ENCODE measurements at regions of chr16 and their contacts with region 1.

Region 1: DNA sequence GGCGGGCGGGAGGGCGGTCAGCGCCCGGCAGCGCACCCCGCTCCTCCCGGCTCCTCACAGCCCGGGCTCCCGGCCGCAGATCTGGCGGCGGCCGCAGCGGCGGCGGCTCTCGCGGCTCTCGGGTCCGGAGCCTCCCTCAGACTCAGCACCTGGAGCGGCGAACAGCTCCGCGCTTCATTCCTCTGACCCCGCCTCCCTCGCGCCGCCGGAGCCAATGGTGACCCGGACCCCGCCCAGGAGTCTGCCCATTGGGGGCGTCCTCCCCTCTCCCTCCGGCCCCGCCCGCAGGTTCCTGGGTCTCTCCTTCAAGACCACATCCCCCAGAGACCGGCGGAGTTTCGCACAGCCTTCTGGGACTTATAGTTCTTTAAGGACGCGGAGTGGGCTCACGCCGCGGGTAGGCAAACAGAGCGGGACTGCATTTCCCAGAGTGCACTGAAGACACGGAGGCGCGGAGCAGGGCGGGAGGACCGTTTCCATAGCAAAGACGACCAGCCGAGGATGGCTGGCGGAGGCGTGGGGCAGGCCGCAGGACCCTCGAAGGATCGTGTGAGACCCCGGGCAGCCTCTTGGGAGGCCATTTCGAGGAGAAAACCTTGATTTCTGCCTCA is at the start of gene SMPD3:
- DNase-seq: peak; percentile 98
- H3K4me3 Mint-ChIP-seq: peak within 1 kb of the TSS; percentile 72
- H3K27ac Mint-ChIP-seq: no peak within 1 kb of the TSS
- H3K4me1 Mint-ChIP-seq: peaks cover 20% of the 10 kb centered on the region
- H3K27me3 Mint-ChIP-seq: peaks cover 16% of the 10 kb centered on the region
- total RNA-seq, gene SMPD3: 0.40 to 0.67 TPM

Region 2: GRCh38 chr16:68396481-68396880 is 52.0 kb before region 1 on chr16:
- CTCF ChIA-PET with region 1: interaction called, 9 read pairs
- intact Hi-C with region 1: loop called (anchors 5 kb)
- DNase-seq: peak; percentile 72
- H3K4me3 Mint-ChIP-seq: no peak overlapping the region
- H3K27ac Mint-ChIP-seq: peak overlapping the region; percentile 27
- H3K4me1 Mint-ChIP-seq: peaks cover 18% of the 10 kb centered on the region
- H3K27me3 Mint-ChIP-seq: no peaks in the 10 kb centered on the region

Region 3: GRCh38 chr16:68417711-68418301 is 30.7 kb before region 1 on chr16:
- CTCF ChIA-PET with region 1: interaction called, 4 read pairs
- intact Hi-C with region 1: loop called (anchors 1 kb)
- DNase-seq: peak; percentile 89
- H3K4me3 Mint-ChIP-seq: peak overlapping the region; percentile 66
- H3K27ac Mint-ChIP-seq: peak overlapping the region; percentile 92
- H3K4me1 Mint-ChIP-seq: peaks cover 52% of the 10 kb centered on the region
- H3K27me3 Mint-ChIP-seq: no peaks in the 10 kb centered on the region

Region 4: DNA sequence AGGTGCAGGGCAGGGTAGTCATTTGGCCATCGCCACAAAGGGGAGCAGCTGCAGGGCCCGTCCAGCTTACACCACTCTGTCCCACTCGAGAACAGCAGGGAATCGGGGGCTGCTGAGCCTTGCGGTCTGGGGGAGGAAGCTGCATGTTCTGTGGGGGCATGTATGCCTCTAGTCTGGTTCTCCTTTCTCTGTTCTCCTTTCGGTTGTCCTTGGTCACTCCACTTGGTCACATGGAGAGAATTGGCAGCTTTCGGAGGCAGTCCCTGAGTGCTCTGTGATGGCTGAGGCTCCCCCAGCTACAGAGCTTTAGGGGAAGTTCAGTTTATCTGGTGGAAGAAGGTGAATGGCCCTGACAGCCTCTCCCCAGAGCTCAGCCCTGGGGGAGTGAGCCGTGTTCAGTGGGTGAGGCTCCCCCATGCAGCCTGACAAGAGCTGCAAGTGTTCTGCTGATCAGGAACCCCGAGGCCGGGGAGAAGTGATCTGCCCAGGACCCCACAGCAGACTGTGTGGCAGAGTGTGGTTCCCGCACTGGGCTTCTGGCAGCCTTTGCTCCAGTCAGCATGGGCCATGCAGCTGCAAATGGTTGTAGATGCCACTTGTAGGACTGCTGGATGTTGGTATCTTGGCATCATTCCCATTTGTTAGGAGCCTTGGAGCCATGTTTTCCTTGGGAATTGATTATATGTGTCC is 22.1 kb after region 1 on chr16:
- CTCF ChIA-PET with region 1: interaction called, 4 read pairs
- intact Hi-C with region 1: loop called (anchors 1 kb)
- DNase-seq: peak; percentile 17
- H3K4me3 Mint-ChIP-seq: peak overlapping the region; percentile 80
- H3K27ac Mint-ChIP-seq: peak overlapping the region; percentile 87
- H3K4me1 Mint-ChIP-seq: peaks cover 34% of the 10 kb centered on the region
- H3K27me3 Mint-ChIP-seq: no peaks in the 10 kb centered on the region

Region 5: GRCh38 chr16:68512183-68512582 is 63.7 kb after region 1 on chr16:
- CTCF ChIA-PET with region 1: interaction called, 6 read pairs
- intact Hi-C with region 1: loop called (anchors 1 kb)
- DNase-seq: no peak
- H3K4me3 Mint-ChIP-seq: no peak overlapping the region
- H3K27ac Mint-ChIP-seq: no peak overlapping the region
- H3K4me1 Mint-ChIP-seq: peaks cover 2% of the 10 kb centered on the region
- H3K27me3 Mint-ChIP-seq: no peaks in the 10 kb centered on the region

Region 6: GRCh38 chr16:68520649-68521086 is 72.2 kb after region 1 on chr16:
- CTCF ChIA-PET with region 1: interaction called, 3 read pairs
- intact Hi-C with region 1: loop called (anchors 2 kb)
- DNase-seq: peak; percentile 94
- H3K4me3 Mint-ChIP-seq: peak overlapping the region; percentile 41
- H3K27ac Mint-ChIP-seq: no peak overlapping the region
- H3K4me1 Mint-ChIP-seq: peaks cover 6% of the 10 kb centered on the region
- H3K27me3 Mint-ChIP-seq: no peaks in the 10 kb centered on the region

Region 7: GRCh38 chr16:68954911-68955635 is 506.6 kb after region 1 on chr16:
- CTCF ChIA-PET with region 1: no interaction called
- intact Hi-C with region 1: no loop called
- DNase-seq: no peak
- H3K4me3 Mint-ChIP-seq: no peak overlapping the region
- H3K27ac Mint-ChIP-seq: no peak overlapping the region
- H3K4me1 Mint-ChIP-seq: no peaks in the 10 kb centered on the region
- H3K27me3 Mint-ChIP-seq: no peaks in the 10 kb centered on the region